Ovary (tissue), 10 donors: ENCODE measurements at regions of chr16 and their contacts with region 1.

Region 1: DNA sequence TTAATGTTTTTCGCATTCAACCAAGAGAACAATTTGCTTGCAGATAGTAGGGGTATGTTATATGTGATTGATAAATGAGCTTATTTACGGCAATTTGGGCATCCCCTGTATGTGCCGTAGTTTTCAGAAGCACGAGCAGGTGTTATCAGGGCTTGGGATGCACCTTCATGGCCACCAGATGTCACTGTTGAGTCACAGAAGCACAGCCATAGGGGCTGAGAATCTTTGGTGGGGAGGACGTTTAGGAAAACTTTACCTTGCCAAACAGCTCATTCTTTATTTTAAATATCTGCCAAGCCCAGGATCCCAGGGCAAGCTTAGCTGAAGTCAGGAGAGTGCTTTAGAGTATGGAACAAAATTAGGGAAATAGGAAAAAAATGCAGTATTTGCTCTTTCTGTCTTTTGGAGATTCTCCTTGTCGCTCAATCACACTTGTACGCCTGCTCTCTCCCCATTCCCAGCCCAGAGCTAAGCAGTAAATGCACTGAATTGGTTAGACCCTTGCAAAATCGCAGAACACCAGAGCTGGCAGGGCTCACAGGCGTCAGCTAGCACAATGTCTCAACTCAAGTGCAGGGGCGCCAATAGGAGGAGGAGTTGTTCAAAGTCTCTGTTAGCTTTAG is 93.6 kb upstream of the MPHOSPH6 start:
- DNase-seq: peak in 3 of 5 donors; percentile 9 to 27 (median 25)
- H3K4me3 ChIP-seq: no peak overlapping the region
- H3K27ac ChIP-seq: no peak overlapping the region
- H3K4me1 ChIP-seq: no peaks in the 10 kb centered on the region
- H3K27me3 ChIP-seq: no peaks in the 10 kb centered on the region
- CTCF ChIP-seq: peak in 2 of 3 donors; percentile 29 to 32
- EP300 ChIP-seq: no peak
- POLR2A ChIP-seq: no peak

Region 2: GRCh38 chr16:82240111-82240510 is 23.5 kb before region 1 on chr16:
- intact Hi-C with region 1: no loop called
- DNase-seq: no peak
- H3K4me3 ChIP-seq: no peak overlapping the region
- H3K27ac ChIP-seq: no peak overlapping the region
- H3K4me1 ChIP-seq: no peaks in the 10 kb centered on the region
- H3K27me3 ChIP-seq: no peaks in the 10 kb centered on the region
- CTCF ChIP-seq: no peak
- EP300 ChIP-seq: no peak
- POLR2A ChIP-seq: no peak

Region 3: DNA sequence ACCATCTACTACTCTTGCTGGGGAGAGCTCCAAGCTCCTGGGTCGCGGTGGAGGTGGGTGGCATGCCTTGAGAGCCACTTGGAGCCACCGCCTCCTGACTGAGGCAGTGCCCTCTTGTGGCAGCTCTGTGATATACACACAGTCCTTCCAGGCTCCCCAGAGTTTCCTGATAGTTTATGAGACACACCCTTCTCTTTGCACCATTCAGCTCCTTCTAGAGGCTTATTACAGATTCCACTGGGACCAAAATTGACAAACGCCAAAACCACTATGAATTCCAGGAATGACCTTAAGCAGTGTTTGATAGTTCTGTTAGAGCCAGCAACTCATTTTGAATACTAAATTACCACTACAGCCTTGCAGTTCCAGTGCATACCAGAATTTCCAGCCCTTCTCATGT is 193.1 kb after region 1 on chr16:
- intact Hi-C with region 1: loop called in 1 of 4 experiments (anchors 10 kb)
- DNase-seq: peak in 1 of 5 donors; percentile 19
- H3K4me3 ChIP-seq: no peak overlapping the region
- H3K27ac ChIP-seq: no peak overlapping the region
- H3K4me1 ChIP-seq: no peaks in the 10 kb centered on the region
- H3K27me3 ChIP-seq: no peaks in the 10 kb centered on the region
- CTCF ChIP-seq: no peak
- EP300 ChIP-seq: no peak
- POLR2A ChIP-seq: no peak

Region 4: DNA sequence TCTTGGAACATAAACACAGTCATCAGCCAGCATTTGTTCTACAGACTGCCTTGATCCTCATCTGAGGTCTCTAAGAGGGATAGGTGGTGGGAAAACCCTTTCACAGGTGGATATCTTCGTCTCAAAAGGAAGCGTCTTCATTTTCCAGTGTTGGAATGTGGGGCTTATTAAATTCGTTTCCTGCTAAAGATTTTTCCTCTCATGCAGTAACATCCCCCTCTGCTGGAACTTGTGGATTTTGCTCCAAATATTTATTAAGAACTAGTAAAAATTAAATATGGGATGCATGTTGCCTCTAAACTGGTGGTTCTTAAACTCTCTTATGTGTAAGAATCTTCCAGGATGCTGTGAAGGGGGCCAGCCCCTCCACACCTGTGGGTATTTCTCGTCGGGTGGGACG is 1615.2 kb after region 1 on chr16:
- intact Hi-C with region 1: loop called in 1 of 4 experiments (anchors 10 kb)
- DNase-seq: no peak
- H3K4me3 ChIP-seq: no peak overlapping the region
- H3K27ac ChIP-seq: no peak overlapping the region
- H3K4me1 ChIP-seq: no peaks in the 10 kb centered on the region
- H3K27me3 ChIP-seq: no peaks in the 10 kb centered on the region
- CTCF ChIP-seq: peak in 2 of 3 donors; percentile 30 to 66
- EP300 ChIP-seq: no peak
- POLR2A ChIP-seq: no peak